ENCODE measurements at regions of chr2 and their contacts with region 1.

Region 1: GRCh38 chr2:44941551-44942234 is at the start of gene SIX3:
- DNase-seq: peak; percentile 23
- H3K4me3 Mint-ChIP-seq: peak within 1 kb of the TSS; percentile 73
- H3K27ac Mint-ChIP-seq: peak within 1 kb of the TSS; percentile 52
- H3K4me1 Mint-ChIP-seq: peaks cover 19% of the 10 kb centered on the region
- H3K27me3 Mint-ChIP-seq: peaks cover 68% of the 10 kb centered on the region
- total RNA-seq, gene SIX3: not detected in 2 replicates

Region 2: DNA sequence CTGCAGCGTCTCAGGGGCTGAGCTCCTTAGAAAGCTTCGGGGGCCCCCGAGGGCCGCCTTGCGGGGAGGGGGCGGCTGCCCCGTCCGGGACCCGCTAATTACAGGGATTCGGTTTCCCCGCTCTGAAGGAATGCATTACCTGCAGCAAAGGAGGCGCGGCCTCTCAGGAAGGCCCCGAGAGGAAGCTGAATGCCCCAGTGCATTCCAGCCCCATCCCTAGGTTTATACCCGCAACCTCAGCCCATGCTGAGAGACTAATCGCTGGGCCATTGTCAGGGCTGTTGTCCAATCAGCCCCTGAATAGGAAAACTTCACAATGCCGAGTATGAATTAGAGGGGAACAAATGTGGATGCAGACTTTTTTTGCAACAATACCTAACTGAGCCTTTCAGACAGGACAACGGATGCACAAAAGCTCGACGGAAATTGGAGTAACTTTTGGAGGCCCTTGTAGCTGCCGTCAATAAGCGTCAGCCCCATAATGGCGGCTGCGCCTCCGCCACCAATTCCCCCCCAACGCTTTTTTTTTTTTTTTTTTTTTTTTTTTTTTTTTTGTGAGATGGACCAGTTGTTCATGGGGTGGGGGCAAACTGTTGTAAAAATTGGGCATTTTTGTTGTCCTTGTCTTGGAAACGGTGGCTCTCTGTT is 138.8 kb before region 1 on chr2:
- intact Hi-C with region 1: no loop called
- DNase-seq: no peak
- H3K4me3 Mint-ChIP-seq: no peak overlapping the region
- H3K27ac Mint-ChIP-seq: no peak overlapping the region
- H3K4me1 Mint-ChIP-seq: no peaks in the 10 kb centered on the region
- H3K27me3 Mint-ChIP-seq: peaks cover 82% of the 10 kb centered on the region

Region 3: DNA sequence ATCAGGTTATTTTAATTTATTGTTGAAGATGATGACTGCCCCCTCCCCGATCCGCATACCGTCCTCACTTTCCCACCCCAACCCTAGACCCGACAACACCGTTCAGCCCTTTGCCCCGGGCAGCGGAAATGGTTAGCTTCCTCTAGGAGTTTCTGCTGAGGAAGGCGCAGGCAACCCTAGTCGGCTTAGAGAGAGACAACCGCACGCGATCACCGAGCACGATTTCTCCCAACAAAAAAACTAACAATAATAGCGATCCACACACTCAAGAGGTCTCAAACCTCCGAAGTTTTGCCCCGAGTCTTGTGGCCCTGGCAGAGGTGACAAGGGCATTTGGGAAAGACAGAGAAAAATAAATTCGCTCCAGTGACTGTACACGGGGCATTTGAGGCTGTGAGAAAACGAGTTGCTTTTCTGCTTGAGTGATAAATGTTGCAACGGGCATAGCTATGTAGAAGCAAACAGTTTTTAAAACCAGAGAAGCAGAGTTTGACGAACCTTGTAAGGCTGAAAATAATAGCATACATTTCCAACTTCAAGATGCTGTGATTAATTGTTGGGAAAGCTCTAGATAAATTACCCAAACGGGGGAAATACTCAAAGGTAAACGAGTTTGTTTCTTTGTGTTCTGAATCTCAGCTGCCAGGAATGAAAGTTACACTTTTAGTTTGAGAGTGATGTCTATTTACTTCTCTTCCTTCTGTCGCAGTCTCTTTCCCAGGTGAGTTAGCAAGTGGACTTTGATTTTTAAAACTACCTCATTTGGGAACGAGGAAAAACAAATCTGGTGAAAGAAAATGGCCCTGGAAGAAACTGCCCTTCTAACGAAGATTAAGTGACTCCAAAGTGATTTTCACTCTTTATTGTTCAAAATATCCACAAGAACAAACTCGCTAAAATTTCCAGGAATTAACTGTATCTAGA is 11.2 kb before region 1 on chr2:
- intact Hi-C with region 1: loop called (anchors 1 kb)
- DNase-seq: no peak
- H3K4me3 Mint-ChIP-seq: no peak overlapping the region
- H3K27ac Mint-ChIP-seq: no peak overlapping the region
- H3K4me1 Mint-ChIP-seq: peaks cover 5% of the 10 kb centered on the region
- H3K27me3 Mint-ChIP-seq: peaks cover 83% of the 10 kb centered on the region

Region 4: DNA sequence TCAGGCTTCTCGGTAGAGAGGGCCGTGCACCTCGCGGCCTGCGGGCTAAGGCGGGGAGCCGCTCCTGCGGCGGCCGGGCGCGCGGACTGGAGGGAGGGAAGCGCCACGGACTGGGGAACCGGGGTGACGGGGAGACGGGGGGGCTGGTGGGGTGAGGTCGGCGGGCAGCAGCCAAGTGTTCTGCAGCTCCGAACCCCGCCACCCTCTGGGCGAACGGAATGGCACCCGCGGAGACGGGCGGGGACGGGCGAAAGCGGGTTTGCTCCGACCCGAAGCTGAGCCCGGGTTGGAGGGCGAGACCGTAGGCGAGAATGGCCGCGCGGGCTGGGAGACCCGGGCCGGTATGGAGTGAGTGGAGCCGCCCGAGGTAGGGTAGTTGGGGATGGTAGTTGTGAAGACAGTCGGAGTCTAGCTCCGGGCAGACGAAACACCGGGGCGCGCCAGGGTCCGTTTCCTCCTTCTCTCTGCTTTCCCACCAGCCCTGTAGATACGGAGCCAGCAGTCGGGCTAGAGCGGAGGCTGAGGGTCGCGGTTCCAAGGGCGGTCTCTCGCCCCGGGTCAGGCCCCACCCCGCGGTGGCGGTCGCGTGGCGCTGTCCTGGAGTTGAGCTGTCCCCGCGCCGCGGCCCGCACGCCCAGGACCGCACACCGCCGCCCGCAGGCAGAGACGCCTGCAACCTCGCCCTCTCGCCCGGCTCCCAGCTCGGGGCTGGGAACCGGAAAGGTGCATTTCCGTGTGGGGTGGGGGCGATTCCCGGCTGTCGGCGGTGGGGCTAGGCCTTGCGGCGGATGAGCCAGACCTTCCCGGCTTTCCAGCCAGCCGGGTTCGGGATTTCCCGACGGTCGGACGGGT is 227.9 kb after region 1 on chr2:
- intact Hi-C with region 1: loop called (anchors 5 kb)
- DNase-seq: no peak
- H3K4me3 Mint-ChIP-seq: no peak overlapping the region
- H3K27ac Mint-ChIP-seq: no peak overlapping the region
- H3K4me1 Mint-ChIP-seq: peaks cover 5% of the 10 kb centered on the region
- H3K27me3 Mint-ChIP-seq: peaks cover 69% of the 10 kb centered on the region

Measured in activated T-helper 1 cell treated with anti-CD3 and anti-CD28 coated beads, Interleukin-12 subunit alpha, Interleukin-12 subunit beta, Interleukin-2, Interleukin-4 antibody, amounts not matched to agents 30 ng/mL and 10 ng/mL and 1 ng/mL, durations not matched to agents 14 hours and 24 hours and 36 hours (primary cell).